Heart right ventricle (tissue), 16 donors: ENCODE measurements at regions of chr4 and their contacts with region 1.

Region 1: DNA sequence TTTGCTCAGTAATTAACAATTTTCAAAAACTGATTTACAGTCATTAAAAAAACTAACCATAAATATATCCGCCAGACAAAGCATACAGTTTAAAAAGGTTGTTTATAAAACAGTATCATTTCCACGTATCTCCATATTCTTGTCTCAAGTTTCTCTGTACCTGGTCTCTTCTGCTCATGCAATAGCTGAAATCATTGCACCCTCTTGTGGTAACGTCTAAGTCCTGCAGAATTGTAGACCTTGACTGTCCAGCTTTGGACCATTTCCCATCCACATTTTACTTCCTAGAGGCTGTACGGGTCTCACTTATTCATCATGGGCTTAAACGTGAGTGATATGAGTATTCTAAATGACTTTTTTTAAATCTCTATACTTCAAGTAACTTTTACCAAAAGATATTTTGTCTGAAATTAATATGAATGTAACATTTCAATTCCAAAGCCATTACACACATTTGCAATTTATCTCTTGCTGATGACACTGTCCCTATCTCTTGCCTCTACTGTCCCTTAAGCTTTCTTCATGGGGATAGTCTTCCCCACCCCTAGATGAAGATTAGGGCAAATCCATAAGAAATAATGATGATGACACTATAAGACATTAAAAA is 118.5 kb downstream of the BTC start:
- DNase-seq: peak in 1 of 2 donors; percentile 14
- ATAC-seq: no peak
- H3K4me3 ChIP-seq: no peak overlapping the region
- H3K27ac ChIP-seq: no peak overlapping the region
- H3K4me1 ChIP-seq: peaks cover 0 to 5% (median 0%) of the 10 kb centered on the region in 9 donors
- H3K27me3 ChIP-seq: peaks cover 0 to 13% (median 0%) of the 10 kb centered on the region in 7 donors
- CTCF ChIP-seq: peak; percentile 16 to 77 (median 71)

Region 2: GRCh38 chr4:74189331-74190043 is 486.3 kb before region 1 on chr4:
- intact Hi-C with region 1: loop called in 1 of 10 experiments (anchors 10 kb)
- DNase-seq: no peak
- ATAC-seq: no peak
- H3K4me3 ChIP-seq: no peak overlapping the region
- H3K27ac ChIP-seq: no peak overlapping the region
- H3K4me1 ChIP-seq: no peaks in the 10 kb centered on the region
- H3K27me3 ChIP-seq: no peaks in the 10 kb centered on the region
- CTCF ChIP-seq: peak; percentile 27 to 81 (median 76)

Region 3: DNA sequence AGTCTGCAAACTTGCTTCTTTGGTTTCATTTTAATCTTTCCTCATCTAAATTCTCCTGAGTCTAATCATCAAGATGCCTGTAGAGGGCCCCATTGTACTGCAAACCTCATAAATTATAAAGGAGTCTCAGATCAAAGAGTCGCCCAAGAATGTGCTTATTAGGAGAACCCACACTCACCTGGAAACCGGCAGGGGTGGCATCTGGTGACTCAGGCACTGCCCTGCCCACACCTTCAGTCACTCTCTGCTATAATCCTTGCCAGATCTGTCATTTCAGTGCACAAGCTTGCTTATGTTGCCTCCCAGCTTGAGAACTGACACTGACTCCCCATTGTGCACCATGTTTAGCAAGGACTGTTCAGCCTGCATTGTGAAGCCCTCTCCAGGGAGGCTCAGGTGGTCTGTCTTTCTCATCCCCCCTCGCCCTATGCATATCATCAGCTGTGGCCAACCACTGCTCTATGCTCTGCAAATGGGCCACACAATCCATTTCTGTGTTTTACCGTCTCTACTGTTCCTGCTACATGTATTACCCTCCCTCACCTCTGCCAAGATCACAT is 355.1 kb before region 1 on chr4:
- intact Hi-C with region 1: loop called in 7 of 10 experiments (anchors 2 to 10 kb)
- DNase-seq: no peak
- ATAC-seq: peak in 3 of 8 donors; percentile 29 to 61 (median 49)
- H3K4me3 ChIP-seq: no peak overlapping the region
- H3K27ac ChIP-seq: no peak overlapping the region
- H3K4me1 ChIP-seq: no peaks in the 10 kb centered on the region
- H3K27me3 ChIP-seq: peaks cover 0 to 29% (median 7%) of the 10 kb centered on the region in 7 donors
- CTCF ChIP-seq: peak in 8 of 9 donors; percentile 12 to 57 (median 46)

Region 4: GRCh38 chr4:74376888-74377483 is 298.8 kb before region 1 on chr4:
- intact Hi-C with region 1: loop called in 8 of 10 experiments (anchors 2 to 10 kb)
- DNase-seq: no peak
- ATAC-seq: peak in 5 of 8 donors; percentile 46 to 73 (median 71)
- H3K4me3 ChIP-seq: no peak overlapping the region
- H3K27ac ChIP-seq: no peak overlapping the region
- H3K4me1 ChIP-seq: no peaks in the 10 kb centered on the region
- H3K27me3 ChIP-seq: peaks cover 0 to under 1% (median 0%) of the 10 kb centered on the region in 7 donors
- CTCF ChIP-seq: peak in 8 of 9 donors; percentile 42 to 75 (median 64)

Region 5: GRCh38 chr4:74543231-74543670 is 132.5 kb before region 1 on chr4:
- intact Hi-C with region 1: loop called in 4 of 10 experiments (anchors 10 kb)
- DNase-seq: no peak
- ATAC-seq: no peak
- H3K4me3 ChIP-seq: no peak overlapping the region
- H3K27ac ChIP-seq: no peak overlapping the region
- H3K4me1 ChIP-seq: peaks cover 0 to 35% (median 5%) of the 10 kb centered on the region in 9 donors
- H3K27me3 ChIP-seq: no peaks in the 10 kb centered on the region
- CTCF ChIP-seq: no peak

Region 6: DNA sequence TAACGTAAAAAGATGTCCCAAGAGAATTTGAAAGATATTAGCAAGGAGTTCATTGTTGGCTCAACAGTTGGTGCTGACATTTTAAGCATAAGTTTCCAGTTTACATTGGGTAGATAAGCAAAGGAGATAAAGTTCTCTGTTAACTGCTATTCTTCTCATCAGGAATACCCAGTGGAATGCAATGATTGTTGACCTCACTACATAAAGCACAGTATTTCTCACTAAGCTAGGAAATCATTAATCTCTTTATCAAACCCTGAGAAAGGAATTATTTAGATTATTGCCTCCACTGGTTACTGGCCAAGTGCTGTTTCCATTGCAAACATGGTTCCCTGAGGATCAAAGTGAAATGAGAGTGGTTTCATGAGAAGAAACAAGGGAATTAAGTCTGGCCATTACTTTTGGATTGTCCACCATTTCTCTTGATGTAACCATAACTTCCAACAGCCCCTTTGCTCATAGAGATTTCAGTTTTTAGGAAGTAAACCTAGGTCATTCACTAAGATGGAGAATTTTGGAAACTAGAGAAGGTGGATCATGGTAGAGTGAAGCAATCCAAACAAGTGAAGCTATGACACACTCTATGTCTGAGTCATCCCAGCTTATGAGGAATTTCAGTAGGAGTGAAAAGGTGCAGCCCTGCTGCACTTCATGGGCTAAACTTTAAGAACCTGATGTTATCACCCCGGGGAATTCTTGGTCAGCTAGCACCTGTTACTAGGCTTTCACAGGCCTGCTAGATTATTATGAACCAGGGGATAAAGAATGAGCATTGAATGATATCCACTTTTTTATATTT is 67.4 kb before region 1 on chr4:
- intact Hi-C with region 1: no loop called
- DNase-seq: no peak
- ATAC-seq: no peak
- H3K4me3 ChIP-seq: no peak overlapping the region
- H3K27ac ChIP-seq: no peak overlapping the region
- H3K4me1 ChIP-seq: peaks cover 0 to 7% (median 0%) of the 10 kb centered on the region in 9 donors
- H3K27me3 ChIP-seq: no peaks in the 10 kb centered on the region
- CTCF ChIP-seq: no peak

Region 7: DNA sequence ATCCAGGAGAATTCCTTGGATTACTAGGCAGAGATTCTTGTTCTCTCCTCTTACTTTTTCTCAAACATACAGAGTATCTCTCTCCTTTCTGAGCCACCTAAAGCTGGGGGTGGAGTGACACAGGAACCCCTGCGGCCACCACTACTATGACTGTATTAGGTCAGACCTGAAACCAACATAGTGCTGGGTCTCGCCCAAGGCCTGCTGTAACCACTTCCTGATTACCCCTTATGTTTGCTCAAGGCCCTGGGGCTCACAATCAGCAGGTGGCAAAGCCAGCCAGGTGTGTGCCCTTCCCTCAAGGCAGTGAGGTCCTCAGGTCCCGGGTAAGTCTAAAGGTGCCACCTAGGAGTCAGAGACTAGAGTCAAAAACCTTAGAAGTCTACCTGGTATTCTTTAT is 423.5 kb after region 1 on chr4:
- intact Hi-C with region 1: no loop called
- DNase-seq: no peak
- ATAC-seq: no peak
- H3K4me3 ChIP-seq: no peak overlapping the region
- H3K27ac ChIP-seq: no peak overlapping the region
- H3K4me1 ChIP-seq: no peaks in the 10 kb centered on the region
- H3K27me3 ChIP-seq: no peaks in the 10 kb centered on the region
- CTCF ChIP-seq: no peak